ENCODE measurements at regions of chr11 and their contacts with region 1.

Region 1: GRCh38 chr11:10436224-10436623 is 18.8 kb upstream of the AMPD3 start:
- DNase-seq: peak; percentile 67 to 82 (median 80)
- H3K4me3 ChIP-seq: peak overlapping the region in 1 of 3 experiments; percentile 7
- H3K4me3 Mint-ChIP-seq: peak overlapping the region in 1 of 2 donors; percentile 72
- H3K27ac ChIP-seq: peak overlapping the region; percentile 67 to 96
- H3K27ac Mint-ChIP-seq: peak overlapping the region; percentile 93 to 98 (median 96)
- H3K4me1 ChIP-seq: peaks cover 21 to 30% of the 10 kb centered on the region in 2 donors
- H3K4me1 Mint-ChIP-seq: peaks cover 27% of the 10 kb centered on the region
- H3K27me3 ChIP-seq: no peaks in the 10 kb centered on the region
- H3K27me3 Mint-ChIP-seq: no peaks in the 10 kb centered on the region
- CTCF ChIP-seq: no peak

Region 2: DNA sequence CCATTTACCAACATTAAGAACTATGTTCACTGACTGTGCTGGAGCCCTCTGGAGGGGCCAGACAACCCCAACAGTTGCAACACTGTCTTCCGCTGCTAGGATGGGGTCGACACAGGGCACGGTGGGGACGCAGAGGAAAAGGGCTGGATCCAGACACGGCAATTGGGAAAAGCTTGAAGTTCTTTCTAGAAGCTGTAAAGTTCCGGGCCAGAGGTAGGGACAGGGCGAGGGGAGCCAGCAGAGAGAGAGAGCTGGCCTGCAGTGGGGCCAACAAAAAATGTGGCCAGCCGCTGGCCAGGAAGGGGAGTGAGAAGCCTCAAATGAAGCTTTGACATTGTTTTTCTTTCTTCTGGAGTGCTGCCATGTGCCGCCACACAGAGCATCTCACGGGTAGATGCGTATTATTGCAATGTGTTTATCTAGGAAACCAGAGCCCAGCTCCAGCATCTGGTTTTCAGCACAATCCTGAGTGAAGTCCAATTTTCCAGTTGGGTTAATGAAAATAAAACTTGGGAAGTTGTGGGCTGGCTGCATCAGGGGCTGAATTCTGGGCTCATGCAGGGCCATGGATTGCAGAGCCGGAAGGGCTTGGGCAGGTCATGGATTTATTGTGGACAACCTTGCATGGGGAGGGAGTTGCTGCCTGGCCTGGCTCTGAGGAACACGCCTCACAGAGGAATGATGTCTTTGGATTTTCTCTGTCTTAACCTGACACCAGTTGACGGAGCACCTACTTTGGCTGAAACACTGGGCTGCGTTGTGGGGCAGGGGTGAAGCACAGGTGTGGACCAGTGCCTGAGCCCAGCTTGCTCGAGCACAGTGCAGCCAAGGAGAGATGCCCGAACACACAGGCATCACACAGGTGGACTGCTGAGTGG is 48.8 kb before region 1 on chr11:
- intact Hi-C with region 1: no loop called
- DNase-seq: no peak
- H3K4me3 ChIP-seq: no peak overlapping the region
- H3K4me3 Mint-ChIP-seq: no peak overlapping the region
- H3K27ac ChIP-seq: no peak overlapping the region
- H3K27ac Mint-ChIP-seq: peak overlapping the region in 1 of 7 donors; percentile 53
- H3K4me1 ChIP-seq: peaks cover 0 to 6% of the 10 kb centered on the region in 2 donors
- H3K4me1 Mint-ChIP-seq: peaks cover 9% of the 10 kb centered on the region
- H3K27me3 ChIP-seq: peaks cover 0 to 5% of the 10 kb centered on the region in 2 donors
- H3K27me3 Mint-ChIP-seq: peaks cover 3 to 19% (median 12%) of the 10 kb centered on the region in 3 donors
- CTCF ChIP-seq: no peak

Region 3: DNA sequence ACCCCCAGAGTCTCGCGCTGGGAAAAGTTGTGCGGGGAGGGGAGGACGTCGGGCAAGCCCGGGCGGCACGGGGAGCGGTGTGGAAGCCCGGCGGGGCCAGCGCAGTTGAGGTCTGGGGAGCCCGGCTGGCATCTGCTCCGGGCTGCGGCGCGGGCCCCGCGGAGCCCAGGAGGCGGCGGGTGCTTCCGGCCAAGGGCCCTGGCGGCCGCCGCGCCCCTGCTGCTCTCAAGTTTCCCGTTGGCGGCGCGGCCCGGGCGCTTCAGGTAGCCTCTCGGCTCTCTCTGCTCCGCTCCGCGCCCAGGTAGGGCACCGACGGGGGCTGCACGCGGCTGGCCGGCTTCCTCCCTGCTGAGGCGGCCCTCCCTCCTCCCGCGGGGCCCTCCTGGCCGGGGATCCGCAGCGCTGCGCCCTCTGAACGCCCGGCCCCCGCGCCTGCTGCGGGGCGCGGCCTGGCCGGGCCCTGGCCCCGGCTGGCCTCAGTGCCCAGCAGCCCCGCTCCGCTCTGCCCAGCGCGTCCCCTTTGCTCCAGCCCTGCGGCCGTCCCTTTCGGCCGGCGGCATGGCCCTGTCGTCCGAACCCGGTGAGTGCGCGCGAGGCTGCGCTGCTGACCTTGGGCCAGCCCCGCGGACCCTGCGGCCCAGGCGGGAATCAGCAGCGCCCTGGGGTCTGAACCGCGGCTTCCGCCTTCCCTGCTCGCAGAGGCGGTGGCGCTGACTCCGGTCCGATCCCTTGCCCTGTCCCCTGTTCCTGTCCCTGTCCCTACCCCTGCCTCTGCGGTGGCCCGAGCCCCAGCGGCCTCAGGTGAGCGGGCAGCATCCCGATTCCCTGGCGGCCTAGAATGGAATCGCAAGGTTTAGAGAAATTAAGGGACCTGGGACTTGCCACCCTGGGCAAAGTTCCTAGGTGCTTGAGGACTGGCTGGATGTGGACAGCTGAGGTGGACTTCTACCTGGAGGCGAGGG is 14.5 kb after region 1 on chr11:
- intact Hi-C with region 1: loop called in 1 of 2 experiments (anchors 2 kb)
- DNase-seq: peak in 2 of 3 donors; percentile 37 to 51
- H3K4me3 ChIP-seq: peak overlapping the region; percentile 26 to 77 (median 56)
- H3K4me3 Mint-ChIP-seq: peak overlapping the region; percentile 87 to 98
- H3K27ac ChIP-seq: peak overlapping the region; percentile 18 to 68
- H3K27ac Mint-ChIP-seq: peak overlapping the region; percentile 67 to 94 (median 83)
- H3K4me1 ChIP-seq: peaks cover 37 to 42% of the 10 kb centered on the region in 2 donors
- H3K4me1 Mint-ChIP-seq: peaks cover 43% of the 10 kb centered on the region
- H3K27me3 ChIP-seq: no peaks in the 10 kb centered on the region
- H3K27me3 Mint-ChIP-seq: peaks cover 0 to 9% (median 8%) of the 10 kb centered on the region in 3 donors
- CTCF ChIP-seq: peak; percentile 71

Region 4: GRCh38 chr11:10606536-10607208 is 170.4 kb after region 1 on chr11:
- intact Hi-C with region 1: no loop called
- DNase-seq: peak; percentile 84 to 94 (median 90)
- H3K4me3 ChIP-seq: peak overlapping the region; percentile 39 to 76 (median 71)
- H3K4me3 Mint-ChIP-seq: peak overlapping the region; percentile 72 to 88
- H3K27ac ChIP-seq: peak overlapping the region; percentile 79 to 95
- H3K27ac Mint-ChIP-seq: peak overlapping the region; percentile 94 to 99 (median 97)
- H3K4me1 ChIP-seq: peaks cover 100% of the 10 kb centered on the region in 2 donors
- H3K4me1 Mint-ChIP-seq: peaks cover 99% of the 10 kb centered on the region
- H3K27me3 ChIP-seq: no peaks in the 10 kb centered on the region
- H3K27me3 Mint-ChIP-seq: peaks cover 0 to under 1% (median 0%) of the 10 kb centered on the region in 3 donors
- CTCF ChIP-seq: no peak